ENCODE measurements at regions of chr17 and their contacts with region 1.

Region 1: DNA sequence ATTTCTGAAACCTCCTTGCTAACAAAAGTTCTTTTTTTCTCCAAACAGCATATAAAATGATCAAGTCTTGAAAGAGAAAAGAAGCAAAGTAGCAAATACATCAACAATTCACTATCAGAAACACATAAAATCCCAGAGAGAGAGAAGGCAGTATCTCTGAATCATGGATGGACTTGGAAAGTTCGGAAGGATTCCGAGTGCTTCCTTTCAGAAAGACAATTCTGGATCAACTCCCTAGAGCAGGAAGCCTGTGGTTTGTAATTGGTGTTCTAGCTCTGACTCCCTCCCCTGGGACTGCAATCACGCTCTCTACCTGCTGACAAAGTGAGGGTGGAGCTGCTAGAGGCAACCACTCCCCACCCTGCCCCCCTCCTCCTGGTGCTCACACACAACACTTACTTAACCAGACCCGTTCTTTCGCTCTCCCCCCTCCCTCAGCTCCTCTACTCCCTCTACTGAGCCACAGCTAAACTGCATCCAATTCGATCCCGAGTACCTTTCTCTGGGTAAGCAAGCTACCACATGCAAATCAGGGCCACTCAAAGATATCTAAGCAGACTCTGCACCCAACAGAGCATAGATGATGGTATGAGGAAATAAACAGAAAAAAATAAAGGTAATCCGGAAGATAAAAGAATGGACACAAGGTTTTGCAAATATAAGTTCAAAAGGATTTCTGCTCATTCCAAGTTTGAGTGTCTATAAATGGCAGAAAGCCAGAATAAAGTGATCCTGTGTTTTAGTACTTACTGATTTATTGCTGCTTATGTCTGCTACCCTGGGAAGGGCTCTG is at the start of gene RNF43:
- DNase-seq: peak; percentile 69 to 81
- ATAC-seq: peak; percentile 91 to 100 (median 98)
- H3K4me3 ChIP-seq: peak within 1 kb of the TSS; percentile 58
- H3K27ac ChIP-seq: no peak within 1 kb of the TSS
- H3K4me1 ChIP-seq: no peaks in the 10 kb centered on the region
- H3K27me3 ChIP-seq: no peaks in the 10 kb centered on the region
- CTCF ChIP-seq: peak; percentile 64
- total RNA-seq, gene RNF43: 0.04 to 0.07 TPM in 2 of 4 donors, not detected in the others

Region 2: GRCh38 chr17:58200017-58200633 is 217.4 kb before region 1 on chr17:
- intact Hi-C with region 1: no loop called
- DNase-seq: peak in 1 of 2 donors; percentile 64
- ATAC-seq: peak in 3 of 4 donors; percentile 43 to 62 (median 43)
- H3K4me3 ChIP-seq: no peak overlapping the region
- H3K27ac ChIP-seq: no peak overlapping the region
- H3K4me1 ChIP-seq: no peaks in the 10 kb centered on the region
- H3K27me3 ChIP-seq: peaks cover 0 to 22% (median 12%) of the 10 kb centered on the region in 3 donors
- CTCF ChIP-seq: peak; percentile 40

Region 3: GRCh38 chr17:58249270-58250133 is 168.0 kb before region 1 on chr17:
- intact Hi-C with region 1: loop called in 1 of 2 experiments (anchors 2 kb)
- DNase-seq: peak; percentile 72 to 80
- ATAC-seq: peak; percentile 90 to 98 (median 93)
- H3K4me3 ChIP-seq: peak overlapping the region; percentile 64
- H3K27ac ChIP-seq: no peak overlapping the region
- H3K4me1 ChIP-seq: peaks cover 8% of the 10 kb centered on the region
- H3K27me3 ChIP-seq: peaks cover 0 to 21% (median 2%) of the 10 kb centered on the region in 3 donors
- CTCF ChIP-seq: peak; percentile 88

Region 4: DNA sequence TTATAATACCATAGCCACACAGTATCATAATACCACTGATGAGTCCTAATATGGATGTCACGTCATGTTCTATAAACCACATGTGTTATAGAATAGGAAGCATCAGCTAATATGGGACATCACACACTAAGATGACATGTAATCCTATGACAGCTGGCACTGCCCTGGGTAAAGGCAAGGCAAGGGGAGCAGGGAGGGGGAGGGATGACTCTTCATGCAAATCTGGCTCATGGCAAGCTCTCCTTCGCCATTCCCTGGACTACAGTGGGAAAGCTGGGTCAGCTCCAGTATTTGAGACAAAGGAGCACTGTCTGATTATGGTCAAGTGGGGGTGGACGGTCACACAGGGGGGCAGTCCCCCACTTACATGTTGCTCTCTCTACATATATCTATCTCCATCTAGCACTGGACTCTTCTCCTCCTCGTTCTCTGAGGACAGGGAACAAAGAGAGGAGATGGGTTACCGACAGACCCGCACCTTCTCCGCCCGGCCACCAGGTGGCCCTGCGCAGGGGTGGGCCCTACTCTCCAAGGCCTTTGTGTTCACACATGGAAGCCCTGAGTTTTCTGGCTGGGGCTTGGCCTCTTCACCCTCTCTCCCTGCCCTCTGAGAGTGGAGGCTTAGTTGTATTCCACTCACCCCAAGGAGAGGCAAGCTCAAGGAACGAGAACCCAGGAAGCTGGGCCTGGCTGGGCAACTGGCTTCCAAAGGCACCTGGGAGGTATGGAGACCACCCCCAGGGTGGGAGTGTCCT is 113.3 kb before region 1 on chr17:
- intact Hi-C with region 1: loop called in 1 of 2 experiments (anchors 10 kb)
- DNase-seq: no peak
- ATAC-seq: peak; percentile 58 to 78 (median 58)
- H3K4me3 ChIP-seq: no peak overlapping the region
- H3K27ac ChIP-seq: no peak overlapping the region
- H3K4me1 ChIP-seq: no peaks in the 10 kb centered on the region
- H3K27me3 ChIP-seq: no peaks in the 10 kb centered on the region
- CTCF ChIP-seq: peak; percentile 66

Region 5: DNA sequence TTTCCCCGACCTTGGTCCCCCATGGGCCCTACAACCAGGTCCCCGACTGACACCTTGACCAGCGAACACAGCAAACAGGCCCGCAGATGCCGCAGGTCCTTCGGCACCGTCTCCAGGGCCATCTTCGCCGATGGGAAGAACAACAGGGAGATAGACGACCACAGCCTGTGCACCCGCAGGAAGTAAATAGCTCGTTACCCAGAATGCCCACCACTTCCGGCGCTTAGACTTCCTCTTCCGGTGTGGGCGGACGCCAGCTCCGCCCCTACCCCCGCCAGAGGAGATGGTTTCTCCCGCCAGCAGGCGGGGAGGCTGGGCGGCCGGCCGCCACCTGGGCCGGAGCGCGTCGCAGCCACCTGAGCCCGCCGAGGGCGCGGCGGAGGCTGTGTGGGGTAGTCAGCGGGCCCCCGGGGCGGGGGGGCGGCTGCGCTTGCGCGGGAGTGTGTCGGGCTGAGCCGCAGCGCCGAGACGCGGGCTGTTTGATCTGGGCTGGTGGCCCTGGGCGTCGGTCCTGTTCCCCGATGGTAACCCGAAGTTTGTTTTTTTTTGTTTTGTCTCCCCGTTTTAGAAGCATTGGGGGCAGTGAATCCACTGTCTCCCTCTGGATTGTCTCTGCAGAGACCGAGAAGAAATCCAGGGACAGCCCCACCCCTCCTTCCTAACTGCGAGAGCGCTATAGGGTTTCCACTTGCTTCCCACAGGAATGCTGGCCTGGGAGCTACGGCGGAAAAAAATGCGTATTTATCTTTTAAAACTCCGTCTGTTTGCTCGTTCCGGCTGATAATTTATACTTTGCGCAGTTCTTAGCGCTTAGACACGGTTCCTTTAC is 65.3 kb before region 1 on chr17 and contains the start of gene SUPT4H1:
- intact Hi-C with region 1: loop called in 1 of 2 experiments (anchors 2 kb)
- DNase-seq: peak; percentile 85 to 94
- ATAC-seq: peak; percentile 98 to 99 (median 98)
- H3K4me3 ChIP-seq: peak within 1 kb of the TSS; percentile 85
- H3K27ac ChIP-seq: peak within 1 kb of the TSS; percentile 94
- H3K4me1 ChIP-seq: peaks cover 15% of the 10 kb centered on the region
- H3K27me3 ChIP-seq: no peaks in the 10 kb centered on the region
- CTCF ChIP-seq: no peak
- total RNA-seq, gene SUPT4H1: 52.1 to 58.9 (median 56.2) TPM

Region 6: DNA sequence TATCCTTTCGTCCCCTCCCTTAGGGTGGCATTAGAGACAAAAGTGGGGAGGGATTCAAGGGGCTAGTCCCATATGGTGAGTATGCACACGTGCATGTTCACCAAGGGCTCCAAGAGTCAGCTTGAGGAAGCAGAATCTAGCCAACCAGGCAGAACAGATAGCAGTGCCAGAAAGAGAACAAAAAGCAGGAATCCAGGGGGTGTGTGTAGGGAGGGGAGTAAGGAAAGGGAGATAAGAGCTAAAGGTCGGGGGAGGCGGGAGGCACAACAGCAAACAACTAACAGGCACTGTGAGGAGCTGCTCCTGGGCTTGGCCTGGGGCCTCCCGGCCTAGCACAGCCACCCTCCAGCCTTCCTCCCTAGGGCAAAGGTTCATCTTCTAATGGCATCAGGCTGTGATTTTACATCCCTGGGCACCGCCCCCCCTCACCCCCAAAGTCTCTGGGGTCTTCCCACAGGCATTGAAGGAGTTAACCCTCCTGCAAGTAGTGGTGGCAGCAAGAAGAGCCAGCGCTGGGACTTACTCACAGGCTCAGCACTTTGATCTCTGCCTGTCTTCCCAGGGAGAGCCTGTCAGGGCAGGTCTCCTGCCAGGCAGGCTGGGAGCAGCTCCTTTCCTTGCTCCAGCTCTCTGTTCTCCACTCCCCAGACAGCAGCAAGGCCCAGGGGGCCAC is 53.1 kb before region 1 on chr17:
- intact Hi-C with region 1: no loop called
- DNase-seq: no peak
- ATAC-seq: no peak
- H3K4me3 ChIP-seq: no peak overlapping the region
- H3K27ac ChIP-seq: no peak overlapping the region
- H3K4me1 ChIP-seq: no peaks in the 10 kb centered on the region
- H3K27me3 ChIP-seq: no peaks in the 10 kb centered on the region
- CTCF ChIP-seq: no peak